ENCODE measurements at regions of chr14 and their contacts with region 1.

Region 1: GRCh38 chr14:20469242-20469889 is at the start of gene PNP:
- DNase-seq: no peak
- H3K4me3 ChIP-seq: peak within 1 kb of the TSS; percentile 94
- CTCF ChIP-seq: no peak

Region 2: GRCh38 chr14:20391505-20391904 is 77.9 kb before region 1 on chr14:
- CTCF ChIA-PET with region 1: no interaction called
- POLR2A ChIA-PET with region 1: no interaction called
- DNase-seq: no peak
- H3K4me3 ChIP-seq: no peak overlapping the region
- CTCF ChIP-seq: no peak

Region 3: DNA sequence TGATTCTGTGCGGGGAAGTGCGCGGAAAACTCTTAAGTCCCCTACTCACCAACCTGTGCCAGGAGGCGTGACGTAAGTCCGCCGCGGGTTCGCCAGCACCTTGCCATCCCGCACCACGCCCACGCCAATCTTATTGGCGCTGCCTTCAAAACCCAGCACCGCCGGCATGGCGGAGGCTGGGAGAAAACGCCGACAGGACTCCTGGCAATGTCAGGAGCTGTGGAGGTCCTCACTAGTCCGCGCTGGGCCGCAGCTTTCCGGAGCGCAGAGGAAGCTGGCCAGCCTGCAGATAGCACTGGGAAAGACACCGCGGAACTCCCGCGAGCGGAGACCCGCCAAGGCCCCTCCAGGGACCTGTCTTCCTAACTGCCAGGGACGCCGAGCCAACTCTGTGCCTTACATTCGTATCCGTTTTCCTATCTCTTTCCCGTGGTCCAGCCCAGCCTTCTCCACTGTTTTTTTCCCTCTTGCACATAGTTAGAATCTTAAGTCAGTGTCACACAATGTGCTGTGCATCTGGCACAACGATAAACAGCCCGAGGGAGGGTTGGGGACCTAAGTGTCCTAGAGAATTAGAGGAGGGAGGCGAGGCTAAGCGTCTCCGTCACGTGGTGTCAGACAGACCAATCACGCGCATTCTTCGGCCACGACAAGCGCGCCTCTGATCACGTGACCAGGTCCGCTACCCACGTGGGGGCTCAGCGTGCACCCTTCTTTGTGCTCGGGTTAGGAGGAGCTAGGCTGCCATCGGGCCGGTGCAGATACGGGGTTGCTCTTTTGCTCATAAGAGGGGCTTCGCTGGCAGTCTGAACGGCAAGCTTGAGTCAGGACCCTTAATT is 14.6 kb before region 1 on chr14 and contains the starts of genes APEX1 and OSGEP:
- CTCF ChIA-PET with region 1: no interaction called
- POLR2A ChIA-PET with region 1: interaction called, 19 read pairs
- DNase-seq: peak; percentile 90
- H3K4me3 ChIP-seq: peak within 1 kb of the TSS; percentile 96
- CTCF ChIP-seq: no peak

Region 4: DNA sequence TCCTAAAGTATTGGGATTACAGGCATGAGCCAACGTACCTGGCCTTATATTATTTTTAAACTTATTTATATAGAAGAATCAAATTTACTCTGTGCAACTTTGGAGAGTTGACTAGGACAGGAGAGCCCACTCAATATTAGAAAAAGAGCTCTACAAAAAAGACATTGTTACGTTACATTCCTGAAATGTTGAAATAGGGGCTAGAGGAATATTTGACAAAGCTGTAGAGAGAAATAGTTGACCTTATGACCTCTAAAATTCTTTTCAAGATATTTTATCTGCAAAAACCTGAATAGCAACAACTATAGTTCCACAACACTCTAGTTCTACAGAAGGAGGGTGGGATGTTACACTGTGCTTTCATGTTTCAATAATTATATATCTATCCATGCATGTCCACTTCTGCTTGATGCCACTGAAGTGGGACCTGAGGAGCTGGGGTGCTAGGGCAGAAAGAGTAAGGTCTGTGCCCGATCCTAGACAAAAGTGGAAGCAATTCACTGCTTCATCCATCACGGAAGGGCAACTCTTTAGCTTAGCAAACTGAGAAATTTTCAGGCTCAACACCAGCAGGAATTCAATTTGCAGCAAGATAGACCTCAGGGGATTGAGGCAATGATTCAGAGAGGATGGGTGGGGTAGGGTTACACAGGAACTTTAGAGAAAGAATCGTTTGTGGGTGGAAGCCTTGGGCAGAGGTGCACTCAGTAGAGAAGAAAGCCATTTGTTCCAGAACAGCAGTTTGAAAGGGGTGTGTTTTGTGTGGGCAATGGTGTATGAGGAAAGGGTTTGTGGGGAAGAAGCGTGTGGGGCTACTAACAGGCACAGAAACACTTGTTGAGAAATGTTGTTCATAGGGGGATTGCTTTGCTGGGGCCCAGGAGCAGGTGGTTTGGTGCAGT is 20.0 kb after region 1 on chr14:
- CTCF ChIA-PET with region 1: interaction called, 4 read pairs
- POLR2A ChIA-PET with region 1: interaction called, 11 read pairs
- DNase-seq: no peak
- H3K4me3 ChIP-seq: no peak overlapping the region
- CTCF ChIP-seq: no peak

Region 5: DNA sequence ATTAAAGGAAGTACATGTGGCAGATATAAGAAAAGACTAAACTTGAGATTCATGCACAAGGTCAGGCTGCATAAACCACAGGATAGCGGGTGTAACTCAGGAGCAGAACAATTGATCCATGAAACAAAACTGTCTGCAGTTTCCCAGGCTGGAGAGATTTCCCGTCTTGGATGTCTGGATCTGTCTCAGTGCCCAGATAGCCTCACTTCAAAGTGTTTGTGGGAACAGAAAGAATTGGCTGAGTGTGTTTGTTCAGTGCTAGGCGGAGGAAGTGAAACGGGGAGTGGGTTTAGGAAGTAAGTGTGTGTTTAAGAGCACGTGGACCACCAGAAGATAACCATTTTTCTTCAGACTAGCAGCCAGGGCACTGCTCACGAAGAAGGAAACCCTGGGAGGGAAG is 34.5 kb after region 1 on chr14:
- CTCF ChIA-PET with region 1: no interaction called
- POLR2A ChIA-PET with region 1: no interaction called
- DNase-seq: no peak
- H3K4me3 ChIP-seq: no peak overlapping the region
- CTCF ChIP-seq: no peak

Measured in AG04449 (cell line).